ENCODE measurements at regions of chr1 and their contacts with region 1.

Region 1: DNA sequence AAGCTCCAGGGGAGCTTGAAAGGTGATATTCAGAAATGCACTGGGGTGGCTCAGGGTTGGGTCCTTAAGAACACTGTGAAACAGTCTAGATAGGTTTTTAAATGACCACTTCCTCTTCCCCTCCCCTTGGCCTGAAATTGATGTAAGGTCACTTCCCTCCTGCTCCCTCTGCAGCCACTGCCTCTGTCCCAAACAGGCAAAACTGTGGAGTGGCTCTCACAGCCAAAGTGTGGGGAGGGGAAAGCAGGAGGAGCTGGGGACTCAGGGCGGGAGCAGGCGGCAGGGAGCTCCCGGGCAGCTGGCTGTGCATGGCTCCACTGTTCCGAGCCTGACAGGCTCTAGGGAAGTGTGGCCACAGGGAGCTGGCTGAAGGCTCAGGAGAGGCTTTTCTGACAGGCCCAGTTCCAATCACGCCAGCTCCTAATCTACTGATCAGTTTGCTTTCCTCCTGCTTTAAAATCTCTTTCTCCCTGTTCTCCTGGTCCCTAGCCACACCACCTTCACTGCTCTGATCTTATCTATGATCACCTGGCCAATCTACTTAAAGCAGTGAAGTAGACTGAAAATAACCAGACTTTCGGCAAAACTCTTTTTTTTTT is 5.1 kb upstream of the CSRP1 start:
- DNase-seq: peak; percentile 76 to 82 (median 77)
- ATAC-seq: peak; percentile 54 to 87 (median 70)
- H3K4me3 ChIP-seq: peak overlapping the region in 2 of 12 donors; percentile 3 to 14
- H3K27ac ChIP-seq: peak overlapping the region; percentile 61 to 98 (median 72)
- H3K4me1 ChIP-seq: peaks cover 7 to 44% (median 28%) of the 10 kb centered on the region in 12 donors
- H3K27me3 ChIP-seq: no peaks in the 10 kb centered on the region
- CTCF ChIP-seq: no peak
- POLR2A ChIP-seq: no peak

Region 2: GRCh38 chr1:201481761-201482493 is 30.1 kb before region 1 on chr1:
- intact Hi-C with region 1: loop called (anchors 1 to 2 kb)
- DNase-seq: peak; percentile 88 to 93 (median 89)
- ATAC-seq: peak; percentile 82 to 89 (median 86)
- H3K4me3 ChIP-seq: peak overlapping the region in 10 of 12 donors; percentile 13 to 54 (median 40)
- H3K27ac ChIP-seq: peak overlapping the region in 11 of 12 donors; percentile 6 to 98 (median 77)
- H3K4me1 ChIP-seq: peaks cover 5 to 44% (median 31%) of the 10 kb centered on the region in 12 donors
- H3K27me3 ChIP-seq: peaks cover 0 to 6% (median 0%) of the 10 kb centered on the region in 9 donors
- CTCF ChIP-seq: peak; percentile 84 to 97 (median 93)
- POLR2A ChIP-seq: peak in 1 of 2 donors; percentile 10